Right ventricle myocardium superior (tissue), 1 donor: ENCODE measurements at regions of chr7 and their contacts with region 1.

Region 1: GRCh38 chr7:155796381-155797261 is 15.6 kb downstream of the SHH start:
- DNase-seq: peak; percentile 77
- ATAC-seq: peak; percentile 90

Region 2: DNA sequence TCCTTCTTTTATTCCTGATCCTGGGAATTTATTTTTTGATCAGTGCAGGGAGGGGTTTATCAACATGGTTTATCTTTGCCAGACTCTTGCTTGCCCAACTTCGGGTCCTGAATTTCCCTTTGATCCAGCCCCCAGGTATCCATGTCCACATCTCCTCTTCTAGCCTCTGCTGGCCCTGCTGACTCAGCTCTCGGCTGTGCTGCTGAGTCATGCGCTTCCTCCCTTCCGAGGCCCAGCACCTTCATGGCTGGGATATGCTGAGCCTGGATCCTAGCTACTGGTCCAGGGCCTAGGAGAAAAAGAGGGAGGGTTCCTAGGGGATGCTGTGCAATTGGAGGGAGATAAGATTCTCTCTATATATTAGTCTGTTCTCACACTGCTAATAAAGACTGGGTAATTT is 396.3 kb after region 1 on chr7:
- intact Hi-C with region 1: no loop called
- DNase-seq: no peak
- ATAC-seq: no peak

Region 3: GRCh38 chr7:156473476-156474240 is 677.0 kb after region 1 on chr7:
- intact Hi-C with region 1: loop called (anchors 5 kb)
- DNase-seq: no peak
- ATAC-seq: no peak

Region 4: GRCh38 chr7:156816943-156817572 is 1020.4 kb after region 1 on chr7:
- intact Hi-C with region 1: loop called (anchors 10 kb)
- DNase-seq: no peak
- ATAC-seq: no peak